ENCODE measurements at regions of chr3 and their contacts with region 1.

Region 1: GRCh38 chr3:106176734-106177133 is 307.9 kb upstream of the CBLB start:
- DNase-seq: peak; percentile 79
- H3K4me3 Mint-ChIP-seq: peak overlapping the region; percentile 38
- H3K27ac Mint-ChIP-seq: peak overlapping the region; percentile 93
- H3K4me1 Mint-ChIP-seq: peaks cover 59% of the 10 kb centered on the region
- H3K27me3 Mint-ChIP-seq: no peaks in the 10 kb centered on the region

Region 2: DNA sequence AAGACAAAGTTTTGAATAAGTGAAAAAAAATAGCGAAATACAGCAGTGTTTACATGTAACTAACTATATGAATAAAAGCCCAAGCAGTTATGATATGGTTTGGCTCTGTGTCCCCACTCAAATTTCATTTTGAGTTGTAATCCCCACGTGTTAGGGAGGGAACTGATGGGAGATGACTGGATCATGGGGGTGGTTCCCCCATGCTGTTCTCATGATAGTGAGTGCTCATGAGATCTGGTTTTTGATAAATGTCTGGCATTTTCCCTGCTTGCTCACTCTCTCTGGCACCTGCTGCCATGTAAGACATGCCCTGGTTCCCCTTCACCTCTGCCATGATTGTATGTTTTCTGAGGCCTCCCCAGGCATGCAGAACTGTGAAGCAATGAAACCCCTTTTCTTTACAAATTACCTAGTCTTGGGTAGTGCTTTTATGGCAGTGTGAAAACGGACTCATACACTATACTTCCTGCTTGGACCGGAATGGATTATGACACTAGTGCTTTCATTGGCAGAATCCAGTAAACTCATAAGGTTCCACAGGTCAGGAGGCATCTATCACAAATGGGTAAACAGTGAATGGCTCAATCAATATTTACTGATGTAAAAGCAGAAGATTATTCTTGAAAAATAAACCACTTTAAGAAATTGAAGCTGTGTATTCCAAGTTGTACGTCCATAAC is 500.0 kb before region 1 on chr3:
- CTCF ChIA-PET with region 1: no interaction called
- intact Hi-C with region 1: loop called (anchors 1 kb)
- DNase-seq: peak; percentile 77
- H3K4me3 Mint-ChIP-seq: no peak overlapping the region
- H3K27ac Mint-ChIP-seq: peak overlapping the region; percentile 87
- H3K4me1 Mint-ChIP-seq: peaks cover 18% of the 10 kb centered on the region
- H3K27me3 Mint-ChIP-seq: no peaks in the 10 kb centered on the region

Region 3: DNA sequence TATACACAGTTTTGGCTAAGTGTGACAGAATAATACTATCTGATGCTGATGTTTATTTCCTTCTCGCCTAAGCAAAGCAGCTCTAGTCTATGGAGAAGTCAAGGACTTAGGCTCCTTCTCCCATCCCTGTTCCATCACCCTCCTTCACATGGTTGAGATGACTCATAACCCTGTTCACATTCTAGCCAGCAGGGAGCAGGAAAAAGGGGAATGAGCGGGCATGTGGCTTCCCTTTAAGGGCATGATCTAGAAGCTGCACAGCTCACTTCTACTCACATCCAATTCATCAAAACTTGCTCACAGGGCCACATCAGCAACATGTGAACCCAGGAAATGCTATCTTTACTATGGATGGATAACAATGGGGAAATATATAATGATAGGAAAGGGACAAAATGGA is 348.8 kb before region 1 on chr3:
- CTCF ChIA-PET with region 1: interaction called, 4 read pairs
- intact Hi-C with region 1: loop called (anchors 1 kb)
- DNase-seq: peak; percentile 26
- H3K4me3 Mint-ChIP-seq: peak overlapping the region; percentile 41
- H3K27ac Mint-ChIP-seq: peak overlapping the region; percentile 99
- H3K4me1 Mint-ChIP-seq: peaks cover 84% of the 10 kb centered on the region
- H3K27me3 Mint-ChIP-seq: no peaks in the 10 kb centered on the region

Region 4: DNA sequence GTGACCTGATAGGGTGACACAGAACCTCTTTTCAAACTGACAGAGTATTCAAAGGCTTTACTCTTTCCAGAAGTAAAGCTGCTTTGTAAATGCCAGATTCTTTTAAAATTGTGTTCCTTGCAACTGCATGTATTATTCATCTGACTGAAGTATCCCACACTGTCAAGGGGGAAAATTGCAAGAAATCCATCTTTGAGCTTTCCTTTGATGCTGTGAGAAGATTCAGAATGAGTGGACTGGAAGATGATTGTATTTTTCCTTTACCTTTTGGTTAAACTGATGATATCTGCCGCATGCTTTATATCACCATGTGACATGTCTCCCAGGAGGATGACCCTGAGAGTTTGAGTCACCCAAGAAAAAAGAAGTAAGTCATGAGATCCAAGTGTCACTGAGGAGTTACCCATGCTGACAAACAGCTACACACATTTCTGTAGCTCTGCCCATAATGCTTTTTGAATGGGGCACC is 57.1 kb before region 1 on chr3:
- CTCF ChIA-PET with region 1: no interaction called
- intact Hi-C with region 1: loop called (anchors 1 kb)
- DNase-seq: peak; percentile 57
- H3K4me3 Mint-ChIP-seq: no peak overlapping the region
- H3K27ac Mint-ChIP-seq: peak overlapping the region; percentile 73
- H3K4me1 Mint-ChIP-seq: peaks cover 28% of the 10 kb centered on the region
- H3K27me3 Mint-ChIP-seq: no peaks in the 10 kb centered on the region

Region 5: DNA sequence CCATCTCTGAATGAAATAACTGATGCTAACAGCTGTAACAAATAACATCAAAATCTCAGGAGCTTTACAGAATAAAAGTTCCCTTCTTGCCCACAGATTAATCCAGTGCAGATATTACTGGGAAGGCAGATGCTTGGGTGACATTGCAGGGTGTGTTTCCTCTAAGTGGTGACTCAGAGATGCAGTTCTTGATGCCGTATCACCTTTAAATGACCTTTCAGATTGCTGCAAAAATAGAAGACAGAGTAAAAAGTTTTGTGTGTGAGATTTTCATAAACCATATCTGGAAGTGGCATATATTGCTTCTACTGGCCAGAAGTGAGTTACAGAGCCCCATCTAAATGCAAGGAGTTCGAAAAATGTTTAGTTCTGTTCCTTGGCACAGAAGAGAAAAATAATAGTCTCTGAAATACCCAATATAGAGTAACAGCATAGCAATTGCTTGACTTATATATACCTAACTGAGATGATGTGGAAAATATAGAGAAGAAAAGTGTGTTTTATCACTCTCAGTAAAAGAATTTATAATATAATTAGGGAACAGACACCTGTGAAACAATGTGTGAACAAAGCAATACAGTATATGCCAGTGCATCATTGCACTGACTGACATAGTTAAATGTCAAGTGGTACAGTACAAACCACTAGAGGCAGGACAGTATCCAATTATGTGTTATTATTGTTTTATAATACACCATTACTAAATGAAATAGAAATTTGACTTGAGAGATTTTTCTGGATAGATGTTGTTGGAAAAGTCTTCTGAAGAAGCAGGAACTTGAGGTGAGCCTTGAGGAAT is 122.8 kb after region 1 on chr3:
- CTCF ChIA-PET with region 1: no interaction called
- intact Hi-C with region 1: loop called (anchors 1 kb)
- DNase-seq: peak; percentile 46
- H3K4me3 Mint-ChIP-seq: no peak overlapping the region
- H3K27ac Mint-ChIP-seq: peak overlapping the region; percentile 40
- H3K4me1 Mint-ChIP-seq: peaks cover 54% of the 10 kb centered on the region
- H3K27me3 Mint-ChIP-seq: no peaks in the 10 kb centered on the region

Region 6: DNA sequence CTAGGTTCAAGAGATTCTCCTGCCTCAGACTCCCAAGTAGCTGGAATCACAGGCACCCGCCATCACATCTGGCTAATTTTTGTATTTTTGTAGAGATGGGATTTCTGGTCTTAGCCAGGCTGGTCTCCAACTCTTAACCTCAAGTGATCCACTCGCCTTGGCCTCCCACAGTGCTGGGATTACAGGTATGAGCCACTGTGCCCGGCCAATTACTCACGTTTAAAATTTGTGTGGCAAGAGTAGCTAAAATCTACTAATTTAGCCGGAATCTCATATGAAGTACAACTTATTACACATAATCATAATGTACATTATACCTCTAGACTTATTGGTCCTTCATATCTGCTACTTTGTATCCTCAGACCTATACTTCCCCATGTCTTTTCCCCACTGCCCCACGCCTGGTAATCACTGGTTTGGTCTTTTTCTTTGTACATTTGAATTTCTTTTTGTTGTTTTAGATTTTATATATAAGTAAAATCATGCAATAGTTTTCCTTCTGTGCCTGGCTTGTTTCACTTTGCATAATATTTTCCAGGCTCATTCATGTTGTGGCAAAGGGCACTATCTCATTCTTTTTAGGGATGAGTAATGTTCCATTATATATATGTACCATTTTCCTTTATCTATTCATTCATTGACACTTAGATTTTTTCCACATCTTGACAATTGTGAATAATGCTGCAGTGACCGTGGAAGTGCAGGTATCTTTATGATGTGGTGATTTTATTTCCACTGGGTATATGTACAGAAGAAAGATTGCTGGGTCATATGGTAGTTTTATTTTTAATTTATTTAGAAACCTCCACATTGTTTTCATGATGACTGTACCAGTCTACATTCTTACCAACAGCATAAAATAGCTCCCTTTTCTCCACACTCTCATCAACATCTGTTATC is 297.1 kb after region 1 on chr3:
- CTCF ChIA-PET with region 1: no interaction called
- intact Hi-C with region 1: loop called (anchors 1 kb)
- DNase-seq: peak; percentile 10
- H3K4me3 Mint-ChIP-seq: no peak overlapping the region
- H3K27ac Mint-ChIP-seq: peak overlapping the region; percentile 59
- H3K4me1 Mint-ChIP-seq: peaks cover 24% of the 10 kb centered on the region
- H3K27me3 Mint-ChIP-seq: no peaks in the 10 kb centered on the region